H1 (cell line): ENCODE measurements at regions of chr2 and their contacts with region 1.

Region 1: GRCh38 chr2:43798300-43798699 is 24.5 kb downstream of the DYNC2LI1 start:
- DNase-seq: no peak
- H3K4me3 ChIP-seq: no peak overlapping the region
- H3K27ac ChIP-seq: no peak overlapping the region
- H3K4me1 ChIP-seq: no peaks in the 10 kb centered on the region
- H3K27me3 ChIP-seq: no peaks in the 10 kb centered on the region
- CTCF ChIP-seq: peak in 1 of 3 experiments; percentile 45; a peak in 2 of 4 replicates
- EP300 ChIP-seq: no peak
- POLR2A ChIP-seq: no peak
- RAD21 ChIP-seq: peak; percentile 25 to 29; a peak in 3 of 4 replicates

Region 2: GRCh38 chr2:43724728-43725526 is 73.4 kb before region 1 on chr2:
- CTCF ChIA-PET with region 1: no interaction called
- POLR2A ChIA-PET with region 1: no interaction called
- DNase-seq: no peak
- H3K4me3 ChIP-seq: no peak overlapping the region
- H3K27ac ChIP-seq: no peak overlapping the region
- H3K4me1 ChIP-seq: peaks cover 0 to 4% (median 2%) of the 10 kb centered on the region in 4 experiments; a peak in 2 of 7 replicates
- H3K27me3 ChIP-seq: no peaks in the 10 kb centered on the region
- CTCF ChIP-seq: no peak
- EP300 ChIP-seq: no peak
- POLR2A ChIP-seq: no peak
- RAD21 ChIP-seq: no peak

Region 3: DNA sequence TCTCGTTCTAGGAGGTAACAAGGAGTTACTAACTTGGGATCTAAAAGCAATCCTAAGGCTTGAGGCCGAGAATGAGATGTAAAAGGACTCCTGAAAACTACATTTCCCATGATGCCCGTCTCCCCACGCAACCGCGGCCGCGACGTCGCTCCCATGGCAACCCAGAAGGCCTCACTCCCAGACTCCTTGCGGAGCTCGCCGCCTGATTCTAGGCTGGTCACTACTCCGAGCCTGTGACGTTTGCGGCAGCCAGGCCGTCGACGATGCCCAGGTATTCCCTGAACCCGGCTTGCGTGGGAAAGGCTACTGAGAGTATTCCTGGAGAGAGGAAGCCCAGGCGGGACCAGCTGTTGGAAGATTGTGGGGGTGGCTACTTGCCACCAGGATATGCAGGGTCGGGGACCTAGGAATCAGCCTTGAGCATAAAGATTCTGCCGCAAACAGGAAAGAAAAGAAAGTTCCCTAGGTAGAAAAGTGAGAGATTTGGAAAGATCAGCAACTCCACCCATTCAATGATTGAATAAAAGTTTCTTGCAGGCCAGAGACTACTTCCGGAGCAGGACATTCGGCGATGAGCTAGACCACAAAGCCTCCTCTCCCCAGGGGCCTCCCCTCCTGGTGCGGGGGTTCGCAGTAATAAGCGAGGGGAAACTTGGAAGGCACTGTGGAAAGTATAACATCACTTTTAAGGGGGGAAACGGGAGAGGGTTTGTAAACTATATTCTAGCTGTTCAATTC is 24.3 kb before region 1 on chr2 and contains the start of gene DYNC2LI1:
- CTCF ChIA-PET with region 1: no interaction called
- POLR2A ChIA-PET with region 1: no interaction called
- DNase-seq: peak; percentile 53 to 92
- H3K4me3 ChIP-seq: peak within 1 kb of the TSS; percentile 48 to 75 (median 68)
- H3K27ac ChIP-seq: no peak within 1 kb of the TSS; the same call in 1 of the 2 replicates
- H3K4me1 ChIP-seq: peaks cover 0 to 3% (median 0%) of the 10 kb centered on the region in 4 experiments; a peak in 1 of 7 replicates
- H3K27me3 ChIP-seq: no peaks in the 10 kb centered on the region
- CTCF ChIP-seq: no peak
- EP300 ChIP-seq: no peak
- POLR2A ChIP-seq: peak in 1 of 2 experiments; percentile 63; a peak in 1 of 3 replicates
- RAD21 ChIP-seq: 0 out of 4 replicates have a peak, but pooled peaks of 1 of the 2 experiments have one; percentile 0
- total RNA-seq, gene DYNC2LI1: 6.4 and 7.6 TPM in 2 replicates

Region 4: DNA sequence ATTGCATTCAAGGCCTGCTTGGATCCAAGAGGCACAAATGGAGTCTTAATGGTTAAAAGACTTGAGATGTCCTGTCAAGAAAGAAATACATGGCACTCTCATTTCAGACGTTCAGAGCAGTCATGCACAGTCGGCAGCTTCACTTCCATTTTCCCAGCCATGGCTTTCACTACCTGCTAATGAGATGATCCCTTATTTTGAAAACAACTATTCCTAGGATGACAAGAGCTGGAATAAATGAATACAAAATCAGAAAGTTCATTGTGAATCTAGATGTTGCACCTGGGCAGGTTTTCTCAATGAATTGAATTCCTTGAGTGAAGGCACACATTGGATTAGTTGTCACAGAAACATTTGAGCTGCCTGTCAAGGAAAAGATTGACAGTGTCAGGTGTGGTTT is 14.6 kb after region 1 on chr2:
- CTCF ChIA-PET with region 1: interaction called, 14 read pairs
- POLR2A ChIA-PET with region 1: no interaction called
- DNase-seq: no peak
- H3K4me3 ChIP-seq: no peak overlapping the region
- H3K27ac ChIP-seq: no peak overlapping the region
- H3K4me1 ChIP-seq: no peaks in the 10 kb centered on the region
- H3K27me3 ChIP-seq: no peaks in the 10 kb centered on the region
- CTCF ChIP-seq: no peak
- EP300 ChIP-seq: no peak
- POLR2A ChIP-seq: no peak
- RAD21 ChIP-seq: no peak